ENCODE measurements at regions of chr7 and their contacts with region 1.

Region 1: GRCh38 chr7:24401628-24402593 is 117.9 kb downstream of the NPY start:
- DNase-seq: no peak
- ATAC-seq: no peak

Region 2: GRCh38 chr7:24108906-24109376 is 293.0 kb before region 1 on chr7:
- intact Hi-C with region 1: no loop called
- DNase-seq: no peak
- ATAC-seq: no peak

Region 3: DNA sequence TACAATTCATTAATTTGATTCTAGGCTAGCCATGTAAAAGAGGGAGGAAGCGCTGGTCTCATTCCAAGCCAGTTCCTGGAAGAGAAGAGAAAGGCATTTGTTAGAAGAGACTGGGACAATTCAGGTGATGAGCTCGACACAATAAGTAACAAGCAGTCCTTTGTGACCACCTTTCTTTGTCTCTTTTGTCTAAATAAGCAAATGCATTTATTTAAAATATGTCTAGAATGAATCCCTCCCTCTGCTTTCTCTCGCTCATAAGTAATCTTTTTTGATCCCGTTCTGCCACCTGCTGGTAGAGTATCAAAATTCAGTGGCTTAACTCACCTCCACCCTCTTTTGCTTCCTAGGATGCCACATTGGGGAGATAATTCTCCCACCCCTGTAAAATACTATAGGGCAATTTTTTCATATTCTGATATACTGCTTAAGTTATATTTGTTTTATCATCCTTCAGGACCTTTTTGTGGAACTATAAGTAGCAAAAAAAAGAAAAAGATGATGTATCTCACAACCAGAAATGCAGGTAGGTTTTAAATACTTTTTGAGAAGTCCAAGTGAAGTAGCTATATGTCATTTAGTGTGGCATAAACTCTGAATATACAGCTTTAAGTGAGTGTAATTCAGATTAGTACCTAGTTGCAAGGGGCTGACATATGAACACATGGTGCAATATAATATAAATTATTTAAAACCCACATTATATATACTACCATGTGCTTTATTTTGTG is 263.8 kb after region 1 on chr7:
- intact Hi-C with region 1: loop called (anchors 10 kb)
- DNase-seq: no peak
- ATAC-seq: no peak

Region 4: GRCh38 chr7:24722386-24723177 is 320.7 kb after region 1 on chr7:
- intact Hi-C with region 1: loop called (anchors 10 kb)
- DNase-seq: no peak
- ATAC-seq: peak; percentile 41